Caco-2 (cell line): ENCODE measurements at regions of chr4 and their contacts with region 1.

Region 1: DNA sequence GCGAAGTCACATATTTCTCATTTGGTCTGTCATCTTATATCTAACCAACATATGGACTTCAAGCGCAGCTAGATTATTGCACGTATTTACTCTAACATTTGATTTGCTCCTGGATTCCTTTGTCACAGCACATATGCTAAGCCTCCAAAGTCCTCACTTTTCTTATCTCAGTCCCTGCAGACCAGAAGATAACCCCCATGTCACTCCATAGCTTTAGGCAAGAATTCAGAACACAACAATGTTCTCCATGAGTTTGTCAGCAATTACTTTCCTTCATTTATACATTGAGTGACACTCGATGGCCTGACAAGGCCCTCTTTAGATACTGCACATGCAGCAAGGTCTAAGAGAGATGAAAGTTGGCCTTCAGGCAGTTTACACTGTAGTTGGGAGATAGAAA is 4.8 kb upstream of the STATH start:
- DNase-seq: peak; percentile 66 to 69
- H3K4me3 ChIP-seq: no peak overlapping the region
- H3K4me3 Mint-ChIP-seq: peak overlapping the region; percentile 40
- H3K27ac Mint-ChIP-seq: peak overlapping the region; percentile 48
- H3K4me1 ChIP-seq: peaks cover 30% of the 10 kb centered on the region
- H3K4me1 Mint-ChIP-seq: peaks cover 19% of the 10 kb centered on the region
- H3K27me3 ChIP-seq: no peaks in the 10 kb centered on the region
- H3K27me3 Mint-ChIP-seq: no peaks in the 10 kb centered on the region
- CTCF ChIP-seq: no peak

Region 2: DNA sequence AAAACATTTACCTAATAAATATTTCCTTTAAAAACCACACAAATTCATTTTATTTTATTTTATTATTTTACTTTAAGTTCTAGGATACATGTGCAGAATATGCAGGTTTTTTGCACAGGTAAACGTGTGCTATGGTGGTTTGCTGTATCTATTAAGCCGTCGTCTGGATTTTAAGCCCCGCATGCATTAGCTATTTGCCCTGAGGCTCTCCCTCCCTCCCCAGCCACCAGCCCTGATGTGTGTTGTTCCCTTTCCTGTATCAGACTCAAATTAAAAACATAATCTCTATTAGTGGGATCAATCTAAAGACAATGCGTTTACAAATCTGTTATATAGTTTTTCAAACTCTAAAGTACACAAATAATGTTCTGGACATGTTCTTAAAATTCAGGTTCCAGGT is 36.0 kb after region 1 on chr4:
- CTCF ChIA-PET with region 1: no interaction called
- POLR2A ChIA-PET with region 1: no interaction called
- intact Hi-C with region 1: no loop called
- DNase-seq: no peak
- H3K4me3 ChIP-seq: no peak overlapping the region
- H3K4me3 Mint-ChIP-seq: no peak overlapping the region
- H3K27ac Mint-ChIP-seq: no peak overlapping the region
- H3K4me1 ChIP-seq: no peaks in the 10 kb centered on the region
- H3K4me1 Mint-ChIP-seq: peaks cover 5% of the 10 kb centered on the region
- H3K27me3 ChIP-seq: no peaks in the 10 kb centered on the region
- H3K27me3 Mint-ChIP-seq: no peaks in the 10 kb centered on the region
- CTCF ChIP-seq: no peak

Region 3: GRCh38 chr4:70059149-70059548 is 68.1 kb after region 1 on chr4:
- CTCF ChIA-PET with region 1: no interaction called
- POLR2A ChIA-PET with region 1: no interaction called
- intact Hi-C with region 1: loop called (anchors 2 kb)
- DNase-seq: peak; percentile 42 to 58
- H3K4me3 ChIP-seq: no peak overlapping the region
- H3K4me3 Mint-ChIP-seq: no peak overlapping the region
- H3K27ac Mint-ChIP-seq: peak overlapping the region; percentile 71
- H3K4me1 ChIP-seq: peaks cover 7% of the 10 kb centered on the region; the same call in 1 of the 2 replicates
- H3K4me1 Mint-ChIP-seq: peaks cover 18% of the 10 kb centered on the region
- H3K27me3 ChIP-seq: no peaks in the 10 kb centered on the region
- H3K27me3 Mint-ChIP-seq: no peaks in the 10 kb centered on the region
- CTCF ChIP-seq: no peak

Region 4: GRCh38 chr4:70269674-70270073 is 278.7 kb after region 1 on chr4:
- CTCF ChIA-PET with region 1: no interaction called
- POLR2A ChIA-PET with region 1: no interaction called
- intact Hi-C with region 1: loop called (anchors 1 kb)
- DNase-seq: peak in 1 of 2 experiments; percentile 1
- H3K4me3 ChIP-seq: no peak overlapping the region
- H3K4me3 Mint-ChIP-seq: no peak overlapping the region
- H3K27ac Mint-ChIP-seq: no peak overlapping the region
- H3K4me1 ChIP-seq: no peaks in the 10 kb centered on the region
- H3K4me1 Mint-ChIP-seq: no peaks in the 10 kb centered on the region
- H3K27me3 ChIP-seq: no peaks in the 10 kb centered on the region
- H3K27me3 Mint-ChIP-seq: no peaks in the 10 kb centered on the region
- CTCF ChIP-seq: peak in 1 of 2 experiments; percentile 15

Region 5: DNA sequence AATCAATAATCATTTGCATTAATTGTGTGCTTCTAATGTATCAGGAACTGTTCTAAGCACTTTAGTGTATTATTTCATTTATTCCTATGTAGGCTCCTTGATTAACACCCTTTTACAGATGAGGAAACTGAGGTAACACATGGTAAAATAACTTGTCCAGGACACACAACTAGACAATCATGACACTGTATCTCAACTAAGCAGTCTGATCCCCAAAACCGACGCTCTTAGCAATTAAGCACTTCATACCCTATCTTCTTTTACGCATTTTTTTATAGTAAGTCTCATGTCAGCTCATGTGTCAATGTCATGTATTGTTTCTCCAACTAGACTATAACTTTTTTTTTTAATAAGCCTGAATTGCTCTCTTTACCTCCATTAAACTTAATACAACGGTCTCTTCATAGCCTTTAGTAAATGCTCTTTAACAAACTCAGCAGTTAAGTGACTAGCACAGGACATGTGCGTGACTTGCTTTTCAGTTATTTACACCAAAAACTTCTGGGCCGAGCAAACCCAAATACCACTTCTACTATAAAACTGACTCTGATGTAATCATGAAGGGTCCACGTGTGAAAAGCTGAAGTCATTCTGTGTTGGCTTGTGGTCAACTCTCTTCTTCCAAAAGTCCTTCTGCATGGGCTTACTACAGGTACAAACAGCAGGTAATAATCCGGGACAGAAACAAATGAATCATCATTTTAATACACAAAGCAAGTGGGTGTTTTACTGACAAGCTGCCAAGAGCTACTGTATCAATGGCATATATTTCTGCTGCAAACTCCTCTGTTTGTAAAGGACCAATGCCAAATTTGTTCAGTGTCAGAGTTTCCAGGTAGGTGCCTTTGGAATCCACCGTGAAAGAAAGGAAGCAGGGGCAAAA is 593.2 kb after region 1 on chr4:
- CTCF ChIA-PET with region 1: no interaction called
- POLR2A ChIA-PET with region 1: no interaction called
- intact Hi-C with region 1: no loop called
- DNase-seq: no peak
- H3K4me3 ChIP-seq: no peak overlapping the region
- H3K4me3 Mint-ChIP-seq: no peak overlapping the region
- H3K27ac Mint-ChIP-seq: no peak overlapping the region
- H3K4me1 ChIP-seq: no peaks in the 10 kb centered on the region
- H3K4me1 Mint-ChIP-seq: no peaks in the 10 kb centered on the region
- H3K27me3 ChIP-seq: no peaks in the 10 kb centered on the region
- H3K27me3 Mint-ChIP-seq: no peaks in the 10 kb centered on the region
- CTCF ChIP-seq: no peak